Dorsolateral prefrontal cortex (tissue), 120 donors: ENCODE measurements at regions of chr4 and their contacts with region 1.

Region 1: DNA sequence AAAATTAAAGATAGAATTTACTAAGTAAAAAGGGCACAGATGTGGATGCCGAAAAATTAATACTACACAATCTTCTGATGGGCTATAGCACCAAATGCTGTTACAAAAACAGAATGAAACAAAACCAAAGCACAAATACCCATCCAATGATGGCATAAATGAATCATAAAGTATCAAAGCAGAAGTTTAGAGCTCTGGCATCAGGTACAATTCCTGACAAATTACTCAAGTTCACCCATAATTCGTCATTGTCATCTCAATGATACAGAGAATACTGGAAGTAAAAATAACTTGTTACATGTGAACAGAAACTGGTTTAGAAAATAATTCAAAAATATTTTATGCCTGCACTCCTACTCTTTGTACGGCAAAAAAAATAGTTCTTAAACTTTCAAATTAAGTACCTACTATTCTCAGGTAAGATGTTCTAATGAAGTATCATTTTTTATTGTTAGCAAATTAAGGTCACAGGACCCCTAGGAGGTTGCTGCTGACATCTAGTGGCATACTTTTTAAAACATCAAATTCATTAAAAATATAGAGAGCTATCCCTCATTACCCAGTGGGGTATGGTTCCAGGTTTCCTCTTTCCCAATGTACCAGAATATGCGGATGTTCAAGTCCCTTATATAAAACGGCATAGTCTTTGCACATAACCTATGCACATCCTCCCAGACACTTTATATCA is 126.1 kb downstream of the INPP4B start:
- DNase-seq: no peak
- H3K4me3 ChIP-seq: no peak overlapping the region
- H3K27ac ChIP-seq: no peak overlapping the region
- H3K27me3 ChIP-seq: no peaks in the 10 kb centered on the region
- CTCF ChIP-seq: peak in 43 of 56 donors; percentile 17 to 71 (median 34)

Region 2: DNA sequence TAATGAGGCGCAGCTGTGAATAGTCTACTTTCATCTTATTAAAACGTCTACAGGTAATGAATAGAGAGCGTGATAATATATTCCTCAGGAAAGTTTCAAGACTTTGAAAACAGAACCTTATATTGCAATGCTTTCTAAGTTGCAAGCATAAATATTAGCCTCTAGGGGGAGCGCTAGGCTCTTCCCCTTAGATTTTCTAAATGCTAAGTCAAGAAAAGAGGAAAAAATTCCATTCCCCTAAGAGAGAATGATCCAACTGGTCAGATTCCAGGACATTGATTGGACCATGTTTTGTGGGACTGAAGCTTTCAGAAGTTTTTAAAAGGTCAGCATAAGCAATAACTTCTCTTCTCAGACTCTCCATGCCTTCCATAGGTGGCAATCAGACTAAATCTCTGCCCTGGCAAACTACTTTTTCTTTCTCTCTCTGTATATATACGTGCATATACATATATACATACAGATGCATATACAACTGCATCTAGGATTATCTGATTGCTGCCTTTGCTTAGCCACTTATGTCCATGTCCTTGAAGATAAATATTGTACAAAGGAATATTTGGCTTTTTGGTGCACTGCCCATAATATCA is 366.8 kb before region 1 on chr4:
- intact Hi-C with region 1: loop called in 1 of 2 experiments (anchors 10 kb)
- DNase-seq: no peak
- H3K4me3 ChIP-seq: no peak overlapping the region
- H3K27ac ChIP-seq: peak overlapping the region in 2 of 59 donors; percentile 2 to 54
- H3K27me3 ChIP-seq: no peaks in the 10 kb centered on the region
- CTCF ChIP-seq: peak; percentile 70 to 92 (median 84)

Region 3: GRCh38 chr4:142615318-142615654 is 104.7 kb before region 1 on chr4:
- intact Hi-C with region 1: no loop called
- DNase-seq: no peak
- H3K4me3 ChIP-seq: no peak overlapping the region
- H3K27ac ChIP-seq: no peak overlapping the region
- H3K27me3 ChIP-seq: no peaks in the 10 kb centered on the region
- CTCF ChIP-seq: no peak